PC-9 (cell line): ENCODE measurements at regions of chr13 and their contacts with region 1.

Region 1: DNA sequence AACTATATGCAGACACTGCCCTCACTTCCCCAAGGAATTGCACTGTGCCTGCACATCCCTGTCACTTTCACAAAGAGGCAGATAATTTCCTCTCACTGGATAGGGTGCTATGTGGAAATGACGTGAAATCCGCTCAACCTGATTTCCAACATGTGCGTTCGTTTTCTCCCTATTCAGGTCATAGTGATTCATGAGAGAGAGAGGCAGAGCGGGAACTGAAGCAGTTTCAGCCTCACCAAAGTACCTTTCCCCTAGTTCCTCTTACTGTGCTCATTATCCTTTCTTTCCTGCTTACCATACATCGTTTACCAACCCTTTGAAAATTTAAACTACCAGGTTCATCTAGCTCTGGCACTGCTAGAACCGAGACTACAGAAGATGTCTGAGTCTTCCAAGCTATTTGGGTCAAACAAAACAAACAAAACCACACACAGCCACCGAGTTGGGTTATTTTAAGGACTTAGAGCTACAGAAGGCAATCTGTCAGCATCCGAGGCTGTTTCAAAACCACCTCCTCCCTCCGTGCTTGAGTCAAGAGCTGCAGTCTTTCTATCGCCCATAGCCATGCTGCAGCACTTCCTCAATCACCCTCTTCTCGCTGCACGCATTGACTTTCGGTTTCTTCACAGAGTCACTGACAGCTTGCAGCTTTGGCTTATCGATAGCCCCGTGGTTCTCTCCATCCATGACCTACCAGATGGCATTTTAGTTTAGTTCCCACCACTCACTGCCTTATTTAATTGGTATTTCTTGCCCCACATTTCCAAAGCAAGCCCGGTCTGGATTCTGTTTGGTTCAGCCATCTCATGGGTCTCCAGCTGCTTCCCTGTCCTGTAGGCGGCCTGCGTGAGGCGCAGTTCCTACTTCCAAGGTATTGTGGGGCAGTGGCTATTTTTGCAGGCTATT is 1395.8 kb downstream of the EFNB2 start:
- DNase-seq: peak; percentile 53 to 77
- H3K4me3 ChIP-seq: peak overlapping the region; percentile 67
- H3K27ac ChIP-seq: peak overlapping the region; percentile 77
- H3K4me1 ChIP-seq: peaks cover 8% of the 10 kb centered on the region
- H3K27me3 ChIP-seq: no peaks in the 10 kb centered on the region
- CTCF ChIP-seq: peak; percentile 65; the same call in 1 of the 2 replicates

Region 2: GRCh38 chr13:104967836-104968630 is 171.6 kb before region 1 on chr13:
- CTCF ChIA-PET with region 1: interaction called, 11 read pairs
- POLR2A ChIA-PET with region 1: no interaction called
- intact Hi-C with region 1: no loop called
- DNase-seq: no peak
- H3K4me3 ChIP-seq: no peak overlapping the region
- H3K27ac ChIP-seq: no peak overlapping the region
- H3K4me1 ChIP-seq: no peaks in the 10 kb centered on the region
- H3K27me3 ChIP-seq: no peaks in the 10 kb centered on the region
- CTCF ChIP-seq: no peak

Region 3: DNA sequence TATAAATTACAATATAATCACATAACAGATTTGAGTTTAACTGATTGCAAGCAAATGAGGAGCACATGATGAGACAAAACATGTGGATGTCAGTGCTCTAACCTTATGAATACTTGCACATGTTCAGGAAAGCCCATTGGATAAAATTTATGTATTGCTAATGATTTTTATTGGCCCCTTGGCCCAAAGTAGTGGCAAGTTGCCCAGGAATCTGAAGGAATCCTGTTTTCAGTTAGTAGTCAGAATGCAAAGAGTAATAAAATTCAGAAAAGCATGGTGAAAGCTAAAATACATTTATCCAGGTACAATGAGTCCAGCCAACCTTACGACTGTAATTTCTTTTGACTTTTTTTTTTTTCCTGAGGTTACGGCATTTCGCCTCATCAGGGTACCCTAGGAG is 143.6 kb before region 1 on chr13:
- CTCF ChIA-PET with region 1: no interaction called
- POLR2A ChIA-PET with region 1: no interaction called
- intact Hi-C with region 1: no loop called
- DNase-seq: no peak
- H3K4me3 ChIP-seq: no peak overlapping the region
- H3K27ac ChIP-seq: no peak overlapping the region
- H3K4me1 ChIP-seq: no peaks in the 10 kb centered on the region
- H3K27me3 ChIP-seq: no peaks in the 10 kb centered on the region
- CTCF ChIP-seq: no peak

Region 4: DNA sequence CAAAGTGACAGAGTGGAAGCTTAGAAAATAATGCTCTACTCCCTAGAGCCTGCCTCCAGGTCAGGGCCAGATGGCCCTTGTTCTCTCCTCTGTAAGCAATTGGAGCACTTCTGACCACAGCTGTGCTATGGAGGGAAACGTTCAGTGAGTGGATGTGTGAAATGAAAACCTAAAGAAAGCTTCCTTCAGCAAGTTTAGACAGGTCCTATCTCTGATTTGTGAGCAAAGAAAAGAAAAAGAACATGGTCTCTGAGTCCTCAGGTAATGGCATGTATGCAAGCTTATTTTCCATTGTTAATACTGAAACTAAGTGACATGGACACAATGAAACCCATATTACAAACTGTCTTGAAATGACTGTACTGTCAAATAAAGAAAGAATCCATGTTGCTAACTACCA is 91.0 kb before region 1 on chr13:
- CTCF ChIA-PET with region 1: no interaction called
- POLR2A ChIA-PET with region 1: no interaction called
- intact Hi-C with region 1: no loop called
- DNase-seq: no peak
- H3K4me3 ChIP-seq: no peak overlapping the region
- H3K27ac ChIP-seq: no peak overlapping the region
- H3K4me1 ChIP-seq: no peaks in the 10 kb centered on the region
- H3K27me3 ChIP-seq: no peaks in the 10 kb centered on the region
- CTCF ChIP-seq: no peak

Region 5: GRCh38 chr13:105297839-105298238 is 158.2 kb after region 1 on chr13:
- CTCF ChIA-PET with region 1: no interaction called
- POLR2A ChIA-PET with region 1: no interaction called
- intact Hi-C with region 1: no loop called
- DNase-seq: no peak
- H3K4me3 ChIP-seq: no peak overlapping the region
- H3K27ac ChIP-seq: no peak overlapping the region
- H3K4me1 ChIP-seq: no peaks in the 10 kb centered on the region
- H3K27me3 ChIP-seq: no peaks in the 10 kb centered on the region
- CTCF ChIP-seq: no peak

Region 6: DNA sequence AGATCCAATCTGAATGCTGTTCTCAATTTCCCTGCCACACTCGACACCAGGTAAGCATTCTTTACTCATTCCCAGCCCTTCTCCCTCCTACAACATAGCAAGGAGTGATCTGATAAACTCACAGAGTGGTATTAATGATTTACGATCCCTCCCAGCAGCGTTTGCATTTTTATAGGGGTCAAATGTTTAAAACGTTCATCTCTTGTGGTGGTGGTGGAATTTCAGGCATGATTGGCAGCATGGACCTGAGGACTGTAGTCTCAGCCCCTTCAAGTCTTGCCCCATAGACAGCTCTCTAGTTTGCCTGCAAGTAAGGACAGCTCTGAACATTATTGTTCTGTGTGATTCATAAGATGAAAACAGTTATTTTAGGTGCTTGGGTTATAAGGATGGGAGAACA is 830.1 kb after region 1 on chr13:
- CTCF ChIA-PET with region 1: no interaction called
- POLR2A ChIA-PET with region 1: no interaction called
- intact Hi-C with region 1: no loop called
- DNase-seq: peak in 1 of 2 experiments; percentile 82
- H3K4me3 ChIP-seq: no peak overlapping the region
- H3K27ac ChIP-seq: no peak overlapping the region
- H3K4me1 ChIP-seq: peaks cover 5% of the 10 kb centered on the region; the same call in 1 of the 2 replicates
- H3K27me3 ChIP-seq: no peaks in the 10 kb centered on the region
- CTCF ChIP-seq: no peak

Region 7: DNA sequence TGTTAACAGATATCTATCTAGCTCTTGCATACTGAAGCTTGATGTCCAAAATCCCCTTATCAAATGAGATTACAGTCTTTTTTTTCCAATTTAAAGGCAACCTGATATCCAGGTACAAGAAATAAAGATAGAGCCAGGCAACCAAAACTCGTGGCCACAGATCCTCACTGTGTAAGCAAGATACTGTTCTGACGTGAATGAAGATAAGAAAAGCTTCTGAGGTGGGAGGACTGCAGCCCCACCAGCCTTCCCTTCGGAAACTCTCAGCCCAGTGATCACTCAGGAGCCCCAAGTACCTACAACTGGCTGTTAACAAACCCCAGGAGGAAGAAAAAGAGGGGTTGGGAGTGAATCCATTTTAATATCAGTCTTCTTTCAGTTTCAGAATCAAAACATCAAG is 1204.2 kb after region 1 on chr13:
- CTCF ChIA-PET with region 1: no interaction called
- POLR2A ChIA-PET with region 1: interaction called, 13 read pairs
- intact Hi-C with region 1: no loop called
- DNase-seq: no peak
- H3K4me3 ChIP-seq: no peak overlapping the region
- H3K27ac ChIP-seq: no peak overlapping the region
- H3K4me1 ChIP-seq: peaks cover 24% of the 10 kb centered on the region
- H3K27me3 ChIP-seq: no peaks in the 10 kb centered on the region
- CTCF ChIP-seq: no peak